ENCODE measurements at regions of chr2 and their contacts with region 1.

Region 1: DNA sequence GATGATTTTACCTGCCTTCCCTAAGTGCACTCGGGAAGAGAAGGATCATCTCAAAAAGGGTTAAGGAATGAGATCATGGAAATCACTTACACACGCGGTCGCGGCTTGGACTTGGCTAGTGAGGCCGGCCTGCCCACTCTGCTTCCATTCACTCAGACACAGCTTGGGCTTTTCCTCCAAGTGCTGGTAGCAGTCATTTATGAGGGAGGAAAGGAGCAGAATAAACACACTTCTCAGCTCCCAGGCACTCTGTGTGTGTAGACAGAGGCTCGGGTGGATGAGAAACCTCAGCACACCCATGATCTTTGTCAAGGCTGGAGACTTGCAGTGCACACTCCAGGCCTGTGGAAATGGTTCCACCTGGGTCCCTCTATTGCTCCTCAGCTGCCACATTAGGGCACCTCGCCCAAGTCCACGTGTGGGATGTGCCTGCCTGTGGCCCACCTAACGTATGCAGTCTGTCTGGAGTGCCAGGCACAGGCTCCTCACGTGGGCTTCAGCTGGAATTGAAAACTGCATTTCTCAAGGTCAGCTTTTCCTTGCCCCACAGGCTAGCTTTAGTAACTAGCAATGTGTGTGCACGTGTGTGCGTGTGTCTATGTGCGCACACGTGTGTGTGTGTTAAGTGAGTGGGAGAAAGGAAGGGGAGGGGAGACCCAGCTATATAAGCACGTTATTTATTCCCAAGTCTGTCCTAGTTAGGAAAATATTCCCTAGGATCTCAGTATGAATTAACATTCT is 288.4 kb downstream of the SOX11 start:
- DNase-seq: peak in 4 of 10 donors; percentile 14 to 85 (median 52)

Region 2: DNA sequence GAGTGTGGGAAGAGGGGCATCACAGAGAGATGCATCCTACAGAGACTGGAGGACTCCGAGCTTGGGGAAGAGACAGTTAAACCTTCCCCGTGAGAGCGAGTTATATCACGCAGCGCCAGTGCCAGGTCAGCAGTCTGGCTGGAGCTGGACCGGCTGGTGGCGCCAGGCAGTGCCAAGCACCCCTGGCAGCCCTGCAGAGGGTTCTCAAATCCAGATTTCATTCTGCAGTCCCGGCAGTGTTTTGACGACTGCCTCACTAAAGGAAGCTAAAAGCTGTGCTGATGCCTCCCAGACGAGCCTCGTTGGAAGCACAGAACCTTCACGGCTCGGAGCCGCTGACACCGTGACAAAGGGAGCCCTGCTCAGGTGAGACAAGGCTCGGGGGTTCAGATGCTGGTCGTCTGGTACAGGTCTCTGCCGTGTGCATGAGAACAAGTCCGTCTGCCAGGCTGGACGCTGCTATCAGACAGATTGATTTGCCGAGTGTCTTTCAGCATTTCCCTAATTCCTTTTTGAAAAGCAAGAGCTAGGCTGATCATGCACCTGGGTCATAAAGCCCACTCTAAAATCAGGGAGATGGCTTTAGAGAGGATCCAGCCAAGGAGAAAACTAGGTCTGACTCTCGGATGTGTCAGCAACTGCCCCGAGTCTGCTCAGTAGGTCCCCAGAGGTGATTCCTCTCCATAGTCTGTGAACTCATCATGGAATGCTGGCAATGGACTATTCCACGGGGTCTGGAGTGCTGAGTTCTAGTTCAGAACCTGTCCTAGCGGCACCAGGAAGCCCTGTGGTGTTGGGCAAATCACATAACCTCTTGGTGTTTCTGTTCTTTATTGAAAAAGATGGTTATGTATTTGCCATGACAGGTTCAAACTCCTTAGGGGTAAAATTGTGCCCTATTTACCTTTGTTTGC is 47.8 kb before region 1 on chr2:
- intact Hi-C with region 1: loop called (anchors 2 kb)
- DNase-seq: peak; percentile 76 to 98 (median 84)

Region 3: GRCh38 chr2:6073241-6074088 is 92.8 kb after region 1 on chr2:
- intact Hi-C with region 1: loop called (anchors 10 kb)
- DNase-seq: peak in 1 of 10 donors; percentile 45